ENCODE measurements at regions of chr1 and their contacts with region 1.

Region 1: GRCh38 chr1:11012250-11013171 is at the start of gene TARDBP:
- DNase-seq: peak; percentile 88 to 95 (median 93)
- ATAC-seq: peak; percentile 95
- H3K4me3 ChIP-seq: peak within 1 kb of the TSS; percentile 74
- H3K4me3 Mint-ChIP-seq: peak within 1 kb of the TSS; percentile 86 to 96 (median 93)
- H3K27ac ChIP-seq: peak within 1 kb of the TSS; percentile 94
- H3K27ac Mint-ChIP-seq: peak within 1 kb of the TSS; percentile 95 to 98 (median 98)
- H3K4me1 ChIP-seq: peaks cover 19 to 24% of the 10 kb centered on the region in 2 donors
- H3K4me1 Mint-ChIP-seq: peaks cover 15 to 36% (median 26%) of the 10 kb centered on the region in 7 donors
- H3K27me3 ChIP-seq: no peaks in the 10 kb centered on the region
- H3K27me3 Mint-ChIP-seq: no peaks in the 10 kb centered on the region
- total RNA-seq, gene TARDBP: 114 to 196 (median 174) TPM

Region 2: DNA sequence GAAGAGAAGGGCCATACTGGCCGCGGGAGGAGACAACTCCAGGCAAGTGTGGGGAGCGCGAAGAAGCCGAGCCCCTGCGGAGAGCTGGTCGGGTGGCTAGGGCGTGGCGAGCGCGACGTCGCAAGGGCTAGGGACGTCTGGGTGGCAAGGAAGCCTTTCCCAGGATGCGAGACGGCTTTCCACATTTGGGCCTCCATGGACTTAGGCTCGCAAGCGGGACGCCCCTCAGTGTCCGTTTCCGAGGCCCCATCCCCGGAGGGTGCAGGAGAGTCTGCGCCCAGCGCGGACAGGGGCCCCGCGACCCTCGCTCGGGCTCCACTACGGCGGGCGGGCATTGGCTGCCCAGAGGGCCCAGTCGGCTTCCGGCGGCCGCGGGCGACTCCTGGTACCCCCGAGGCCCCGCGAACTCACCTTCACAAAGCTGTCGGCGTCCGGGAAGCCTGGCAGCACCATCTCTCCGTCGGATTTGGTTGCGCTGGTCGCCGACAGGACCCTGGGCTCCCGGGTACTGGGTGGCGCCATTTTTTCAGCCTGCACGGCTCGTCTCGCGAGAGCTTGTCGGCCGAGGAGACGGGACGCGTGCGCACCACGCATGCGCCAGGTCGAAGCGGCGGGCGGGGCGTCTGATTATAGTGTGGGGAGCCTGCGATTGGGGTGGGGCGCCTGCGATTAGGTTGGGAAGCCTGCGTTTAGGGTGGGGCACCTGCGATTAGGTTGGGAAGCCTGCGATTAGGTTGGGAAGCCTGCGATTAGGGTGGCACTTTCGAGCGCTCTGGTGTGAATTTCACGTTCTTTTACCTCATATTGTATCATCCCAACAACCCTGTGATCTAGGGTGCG is 87.0 kb after region 1 on chr1 and contains the start of gene EXOSC10:
- CTCF ChIA-PET with region 1: no interaction called
- POLR2A ChIA-PET with region 1: interaction called, 4 read pairs
- intact Hi-C with region 1: loop called (anchors 1 to 2 kb)
- DNase-seq: peak; percentile 90 to 97 (median 95)
- ATAC-seq: peak; percentile 99
- H3K4me3 ChIP-seq: peak within 1 kb of the TSS; percentile 74
- H3K4me3 Mint-ChIP-seq: peak within 1 kb of the TSS; percentile 87 to 99 (median 96)
- H3K27ac ChIP-seq: peak within 1 kb of the TSS; percentile 88
- H3K27ac Mint-ChIP-seq: peak within 1 kb of the TSS; percentile 91 to 97 (median 95)
- H3K4me1 ChIP-seq: peaks cover 3 to 4% of the 10 kb centered on the region in 2 donors
- H3K4me1 Mint-ChIP-seq: peaks cover 6 to 27% (median 20%) of the 10 kb centered on the region in 7 donors
- H3K27me3 ChIP-seq: no peaks in the 10 kb centered on the region
- H3K27me3 Mint-ChIP-seq: no peaks in the 10 kb centered on the region
- total RNA-seq, gene EXOSC10: 72.0 to 83.4 (median 80.9) TPM

Region 3: GRCh38 chr1:11174261-11174942 is 161.9 kb after region 1 on chr1:
- CTCF ChIA-PET with region 1: no interaction called
- POLR2A ChIA-PET with region 1: no interaction called
- intact Hi-C with region 1: no loop called
- DNase-seq: no peak
- ATAC-seq: no peak
- H3K4me3 ChIP-seq: no peak overlapping the region
- H3K4me3 Mint-ChIP-seq: no peak overlapping the region
- H3K27ac ChIP-seq: no peak overlapping the region
- H3K27ac Mint-ChIP-seq: no peak overlapping the region
- H3K4me1 ChIP-seq: no peaks in the 10 kb centered on the region
- H3K4me1 Mint-ChIP-seq: no peaks in the 10 kb centered on the region
- H3K27me3 ChIP-seq: no peaks in the 10 kb centered on the region
- H3K27me3 Mint-ChIP-seq: no peaks in the 10 kb centered on the region

Measured in naive thymus-derived CD4-positive, alpha-beta T cell (primary cell).